Cardiac septum (tissue), 1 donor: ENCODE measurements at regions of chr12 and their contacts with region 1.

Region 1: DNA sequence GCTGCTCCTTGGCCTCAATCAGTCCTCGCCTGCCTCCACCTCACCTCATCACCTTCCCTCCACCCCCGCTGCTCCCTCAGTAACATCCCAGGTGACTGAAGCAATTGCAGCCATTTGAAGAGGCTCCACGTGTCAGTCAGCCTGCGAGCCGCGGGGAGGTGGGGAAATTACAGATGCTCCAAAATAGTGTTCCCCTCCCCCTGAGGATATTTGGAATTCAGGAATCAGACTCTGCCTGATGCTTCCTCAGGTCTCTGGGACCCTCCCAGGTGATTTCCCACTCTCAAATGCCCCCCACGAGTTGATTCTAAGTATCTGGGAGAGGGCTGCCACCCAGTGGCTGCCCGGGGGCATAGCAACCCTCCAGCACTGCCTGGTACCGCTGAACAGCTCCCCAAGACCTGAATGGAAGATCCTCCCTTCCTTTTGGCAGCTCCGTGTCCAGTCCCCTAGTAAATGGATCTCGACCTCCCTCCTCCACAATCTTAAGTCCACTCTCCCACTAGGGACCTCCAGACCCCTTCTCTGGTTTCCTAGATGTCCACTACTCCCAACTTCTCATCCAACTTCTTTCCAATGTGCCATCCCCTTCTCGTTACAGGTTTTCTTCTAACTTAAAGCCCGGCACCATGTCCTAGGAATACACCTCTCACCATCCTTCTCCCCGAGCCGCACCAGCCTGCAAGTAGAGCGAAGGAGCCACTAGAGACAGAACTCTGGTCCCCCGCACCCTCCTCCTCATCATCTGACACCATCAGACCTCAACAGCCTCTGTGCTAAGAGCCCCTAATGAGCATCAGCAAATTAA is 1.4 kb upstream of the ASIC1 start:
- DNase-seq: no peak

Region 2: DNA sequence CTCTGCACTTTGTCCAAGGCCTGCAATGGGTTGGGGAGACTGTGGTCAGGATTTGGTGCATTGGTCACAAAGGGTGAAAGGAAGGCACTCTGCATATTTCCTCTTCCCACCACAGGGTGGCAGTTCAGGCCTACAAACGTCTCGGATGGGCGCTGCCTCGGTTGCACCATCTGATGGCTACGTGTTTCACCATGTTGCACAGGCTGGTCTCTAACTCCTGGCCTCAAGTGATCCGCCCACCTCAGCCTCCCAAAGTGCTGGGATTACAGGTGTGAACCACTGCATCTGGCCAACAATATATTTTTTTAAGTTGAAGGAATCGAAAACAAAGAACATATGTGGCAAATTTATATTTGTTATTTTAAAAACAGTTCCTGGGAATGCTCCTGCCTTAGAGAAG is 279.6 kb before region 1 on chr12:
- intact Hi-C with region 1: loop called (anchors 5 kb)
- DNase-seq: no peak

Region 3: GRCh38 chr12:49866859-49867579 is 189.0 kb before region 1 on chr12:
- intact Hi-C with region 1: loop called (anchors 5 kb)
- DNase-seq: peak; percentile 88

Region 4: GRCh38 chr12:50043854-50044253 is 12.2 kb before region 1 on chr12:
- intact Hi-C with region 1: loop called (anchors 1 kb)
- DNase-seq: no peak